ENCODE measurements at regions of chr12 and their contacts with region 1.

Region 1: DNA sequence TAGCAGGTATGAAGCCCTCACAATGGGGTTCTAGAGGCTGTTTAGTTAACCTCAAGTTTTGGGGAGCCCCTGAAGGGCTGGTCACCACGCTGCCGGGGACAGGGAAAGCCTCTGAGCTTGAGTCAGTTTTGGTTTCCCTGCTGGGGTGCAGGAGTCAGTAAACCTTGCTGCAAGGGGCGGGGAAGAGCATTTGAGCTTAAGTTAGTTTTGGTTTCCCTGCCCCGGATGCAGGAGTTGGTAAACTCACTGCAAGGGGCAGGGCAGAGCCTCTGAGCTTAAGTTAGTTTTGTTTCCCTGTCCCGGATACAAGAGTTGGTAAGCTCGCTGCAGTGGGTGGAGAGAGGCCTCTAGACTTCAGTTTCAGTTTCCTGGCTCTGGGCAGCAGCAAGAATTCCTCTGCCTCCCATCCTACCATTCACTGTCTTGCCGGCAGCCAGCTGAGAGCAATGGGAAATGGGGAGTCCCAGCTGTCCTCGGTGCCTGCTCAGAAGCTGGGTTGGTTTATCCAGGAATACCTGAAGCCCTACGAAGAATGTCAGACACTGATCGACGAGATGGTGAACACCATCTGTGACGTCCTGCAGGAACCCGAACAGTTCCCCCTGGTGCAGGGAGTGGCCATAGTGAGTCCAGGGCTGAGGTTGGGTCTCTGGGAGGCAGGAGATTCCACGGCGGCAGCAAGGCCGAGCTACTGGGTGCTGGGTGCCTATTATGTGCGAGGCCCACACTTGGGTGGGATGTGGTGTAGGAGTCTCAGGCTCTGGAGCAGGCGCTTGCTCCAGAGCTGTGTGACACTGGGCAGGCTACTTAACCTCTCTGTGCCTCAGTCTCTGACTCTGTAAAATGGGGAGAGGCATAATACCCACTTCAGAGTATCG is at the start of gene OAS2:
- DNase-seq: peak; percentile 94
- ATAC-seq: peak; percentile 92
- H3K4me3 ChIP-seq: peak within 1 kb of the TSS; percentile 97
- H3K27ac ChIP-seq: peak within 1 kb of the TSS; percentile 100
- H3K4me1 ChIP-seq: peaks cover 13% of the 10 kb centered on the region
- H3K27me3 ChIP-seq: no peaks in the 10 kb centered on the region
- CTCF ChIP-seq: no peak
- EP300 ChIP-seq: peak in 1 of 2 experiments; percentile 11; a peak in 1 of 4 replicates
- POLR2A ChIP-seq: peak; percentile 88
- RAD21 ChIP-seq: no peak
- polyA plus RNA-seq, gene OAS2: 32.4 to 43.4 TPM

Region 2: DNA sequence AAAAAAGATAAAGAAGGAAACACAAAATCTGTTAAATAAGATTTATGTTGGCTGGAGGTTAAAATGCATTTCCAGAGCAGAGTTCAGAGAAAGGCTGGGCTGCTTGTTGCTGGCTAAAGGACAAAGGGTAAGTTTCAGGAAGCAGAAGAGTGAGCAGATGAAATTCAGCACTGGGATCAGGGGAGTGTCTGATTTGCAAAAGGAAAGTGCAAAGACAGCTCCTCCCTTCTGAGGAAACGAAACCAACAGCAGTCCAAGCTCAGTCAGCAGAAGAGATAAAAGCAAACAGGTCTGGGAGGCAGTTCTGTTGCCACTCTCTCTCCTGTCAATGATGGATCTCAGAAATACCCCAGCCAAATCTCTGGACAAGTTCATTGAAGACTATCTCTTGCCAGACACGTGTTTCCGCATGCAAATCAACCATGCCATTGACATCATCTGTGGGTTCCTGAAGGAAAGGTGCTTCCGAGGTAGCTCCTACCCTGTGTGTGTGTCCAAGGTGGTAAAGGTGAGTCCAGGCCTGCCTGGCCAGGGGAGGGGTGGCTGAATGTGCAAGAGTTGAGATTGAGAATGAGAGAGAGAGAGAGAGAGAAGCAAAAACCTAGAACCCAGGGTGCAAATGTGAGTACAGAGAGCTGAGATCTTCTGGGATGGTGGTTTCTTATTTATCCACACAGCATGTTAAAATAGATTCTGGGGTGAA is 71.5 kb before region 1 on chr12 and contains the start of gene OAS1:
- CTCF ChIA-PET with region 1: interaction called, 23 read pairs
- POLR2A ChIA-PET with region 1: interaction called, 69 read pairs
- RAD21 ChIA-PET with region 1: interaction called, 47 read pairs
- SMC1A ChIA-PET with region 1: interaction called, 99 read pairs
- in situ Hi-C with region 1: no loop called
- intact Hi-C with region 1: loop called (anchors 1 kb)
- DNase-seq: peak; percentile 89
- ATAC-seq: peak; percentile 87
- H3K4me3 ChIP-seq: peak within 1 kb of the TSS; percentile 85
- H3K27ac ChIP-seq: peak within 1 kb of the TSS; percentile 93
- H3K4me1 ChIP-seq: peaks cover 22% of the 10 kb centered on the region
- H3K27me3 ChIP-seq: no peaks in the 10 kb centered on the region
- CTCF ChIP-seq: no peak
- EP300 ChIP-seq: no peak
- POLR2A ChIP-seq: peak; percentile 85
- RAD21 ChIP-seq: no peak
- polyA plus RNA-seq, gene OAS1: 88.9 to 117 TPM

Region 3: DNA sequence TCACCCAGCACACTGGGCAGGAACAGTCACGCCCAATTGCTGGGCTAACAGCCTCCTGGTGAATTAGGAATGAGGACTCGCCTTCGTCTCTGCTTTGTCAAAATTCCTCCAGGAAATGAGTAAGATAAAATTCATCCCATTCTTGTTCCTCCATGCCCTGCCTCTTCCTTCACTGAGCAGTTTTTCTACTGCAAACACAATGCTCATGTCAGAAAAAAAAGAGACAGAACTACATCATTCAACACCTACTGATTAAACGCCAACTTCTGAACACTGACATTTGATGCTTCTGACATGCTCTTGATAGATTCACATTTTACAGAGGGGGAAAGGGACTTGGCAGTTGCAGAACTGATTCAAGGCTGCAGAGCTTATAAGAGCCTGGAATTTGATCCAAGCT is 40.6 kb after region 1 on chr12:
- CTCF ChIA-PET with region 1: no interaction called
- POLR2A ChIA-PET with region 1: no interaction called
- RAD21 ChIA-PET with region 1: no interaction called
- SMC1A ChIA-PET with region 1: no interaction called
- in situ Hi-C with region 1: no loop called
- intact Hi-C with region 1: no loop called
- DNase-seq: no peak
- ATAC-seq: no peak
- H3K4me3 ChIP-seq: no peak overlapping the region
- H3K27ac ChIP-seq: no peak overlapping the region
- H3K4me1 ChIP-seq: no peaks in the 10 kb centered on the region
- H3K27me3 ChIP-seq: peaks cover 0 to 3% of the 10 kb centered on the region in 2 experiments; a peak in 2 of 4 replicates
- CTCF ChIP-seq: no peak
- EP300 ChIP-seq: no peak
- POLR2A ChIP-seq: no peak
- RAD21 ChIP-seq: no peak

Region 4: DNA sequence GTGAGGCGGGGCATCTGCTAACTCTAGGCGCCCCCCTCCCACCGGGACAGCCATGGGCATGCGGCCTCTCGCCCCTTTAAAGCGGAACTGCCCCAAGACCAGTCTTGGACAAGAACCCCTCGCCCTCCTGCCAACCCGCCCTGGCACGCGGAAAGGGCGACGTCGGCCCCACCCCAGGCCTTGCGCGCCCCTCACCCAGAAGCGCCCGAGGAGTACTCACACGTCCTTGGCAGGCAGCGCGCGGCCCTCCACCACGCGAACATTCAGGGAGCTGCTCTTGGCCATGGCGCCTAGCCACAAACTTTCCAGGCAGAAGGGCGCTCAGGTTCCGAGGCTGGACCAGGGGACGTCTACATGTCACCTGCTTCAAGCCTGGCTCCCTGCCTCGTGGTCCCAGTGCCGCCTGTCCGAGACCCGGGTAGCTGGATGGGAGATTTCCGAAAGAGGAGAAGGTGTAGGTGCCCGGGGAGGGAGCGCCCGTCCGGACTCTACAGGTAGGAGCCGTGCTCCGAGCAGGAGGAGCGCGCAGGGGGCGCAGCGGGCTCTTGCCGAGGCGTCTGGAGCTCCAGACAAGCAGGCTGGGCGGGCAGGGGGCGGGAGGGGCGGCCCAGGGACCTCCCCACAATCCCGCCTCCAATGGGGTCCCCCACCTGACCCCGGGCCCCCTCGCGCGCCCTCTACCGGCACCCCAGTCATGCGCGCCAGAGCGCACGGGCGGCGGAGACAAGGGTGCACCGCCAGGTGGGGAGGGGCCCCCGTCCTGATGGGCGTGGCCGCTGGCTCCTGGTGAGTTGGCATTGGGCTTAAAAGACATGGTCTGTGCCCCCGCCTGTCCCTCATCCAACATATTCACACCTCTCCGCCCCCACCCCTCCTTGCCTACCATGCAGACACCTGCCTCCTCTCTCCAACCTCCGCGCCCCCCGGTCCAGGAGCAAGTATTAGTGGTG is 157.1 kb after region 1 on chr12 and contains the start of gene RASAL1:
- CTCF ChIA-PET with region 1: no interaction called
- POLR2A ChIA-PET with region 1: no interaction called
- RAD21 ChIA-PET with region 1: no interaction called
- SMC1A ChIA-PET with region 1: no interaction called
- in situ Hi-C with region 1: no loop called
- intact Hi-C with region 1: no loop called
- DNase-seq: no peak
- ATAC-seq: peak; percentile 91
- H3K4me3 ChIP-seq: no peak within 1 kb of the TSS
- H3K27ac ChIP-seq: no peak within 1 kb of the TSS
- H3K4me1 ChIP-seq: peaks cover under 1% of the 10 kb centered on the region; the same call in 1 of the 2 replicates
- H3K27me3 ChIP-seq: no peaks in the 10 kb centered on the region; a peak in 2 of 4 replicates
- CTCF ChIP-seq: peak; percentile 41 to 69 (median 53)
- EP300 ChIP-seq: no peak
- POLR2A ChIP-seq: no peak
- RAD21 ChIP-seq: no peak
- polyA plus RNA-seq, gene RASAL1: not detected